ENCODE measurements at regions of chr19 and their contacts with region 1.

Region 1: GRCh38 chr19:53671663-53672062 is 39.9 kb downstream of the DPRX start:
- DNase-seq: no peak
- ATAC-seq: no peak
- H3K4me3 ChIP-seq: no peak overlapping the region
- H3K27ac ChIP-seq: no peak overlapping the region
- H3K4me1 ChIP-seq: no peaks in the 10 kb centered on the region
- H3K27me3 ChIP-seq: 0 out of 2 replicates have a peak, but pooled peaks cover under 1% of the 10 kb centered on the region
- CTCF ChIP-seq: no peak

Region 2: GRCh38 chr19:53431399-53432087 is 240.1 kb before region 1 on chr19 and contains the start of gene ZNF761:
- CTCF ChIA-PET with region 1: no interaction called
- POLR2A ChIA-PET with region 1: no interaction called
- in situ Hi-C with region 1: no loop called
- intact Hi-C with region 1: no loop called
- DNase-seq: peak; percentile 59
- ATAC-seq: peak; percentile 100
- H3K4me3 ChIP-seq: peak within 1 kb of the TSS; percentile 70 to 82
- H3K27ac ChIP-seq: peak within 1 kb of the TSS; percentile 94
- H3K4me1 ChIP-seq: no peaks in the 10 kb centered on the region
- H3K27me3 ChIP-seq: no peaks in the 10 kb centered on the region
- CTCF ChIP-seq: peak; percentile 17; the same call in 1 of the 2 replicates
- total RNA-seq, gene ZNF761: 21.8 TPM

Region 3: GRCh38 chr19:53642381-53643081 is 29.1 kb before region 1 on chr19:
- CTCF ChIA-PET with region 1: interaction called, 13 read pairs
- POLR2A ChIA-PET with region 1: no interaction called
- in situ Hi-C with region 1: no loop called
- intact Hi-C with region 1: no loop called
- DNase-seq: no peak
- ATAC-seq: no peak
- H3K4me3 ChIP-seq: no peak overlapping the region
- H3K27ac ChIP-seq: no peak overlapping the region
- H3K4me1 ChIP-seq: no peaks in the 10 kb centered on the region
- H3K27me3 ChIP-seq: no peaks in the 10 kb centered on the region
- CTCF ChIP-seq: no peak

Region 4: DNA sequence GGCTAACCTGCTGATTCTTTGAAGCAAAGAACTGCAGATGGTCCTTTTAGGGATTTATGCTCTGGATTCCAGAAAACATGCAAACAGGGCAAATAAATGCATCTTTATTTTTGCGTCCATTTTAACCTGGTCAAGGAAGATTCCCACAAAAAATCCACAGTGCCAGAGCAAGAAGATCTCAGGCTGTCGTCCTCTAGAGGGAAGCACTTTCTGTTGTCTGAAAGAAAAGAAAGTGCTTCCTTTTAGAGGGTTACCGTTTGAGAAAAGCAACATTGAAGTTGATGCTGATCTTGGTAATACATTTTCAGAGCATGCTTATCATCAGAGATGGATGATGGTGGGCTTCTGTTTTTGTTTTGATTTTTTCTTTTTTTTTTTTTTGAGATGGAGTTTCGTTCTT is 35.6 kb after region 1 on chr19:
- CTCF ChIA-PET with region 1: interaction called, 3 read pairs
- POLR2A ChIA-PET with region 1: interaction called, 11 read pairs
- in situ Hi-C with region 1: no loop called
- intact Hi-C with region 1: no loop called
- DNase-seq: no peak
- ATAC-seq: no peak
- H3K4me3 ChIP-seq: no peak overlapping the region
- H3K27ac ChIP-seq: no peak overlapping the region
- H3K4me1 ChIP-seq: no peaks in the 10 kb centered on the region
- H3K27me3 ChIP-seq: no peaks in the 10 kb centered on the region
- CTCF ChIP-seq: no peak

Region 5: GRCh38 chr19:53730390-53730789 is 58.7 kb after region 1 on chr19:
- CTCF ChIA-PET with region 1: no interaction called
- POLR2A ChIA-PET with region 1: interaction called, 12 read pairs
- in situ Hi-C with region 1: no loop called
- intact Hi-C with region 1: no loop called
- DNase-seq: no peak
- ATAC-seq: no peak
- H3K4me3 ChIP-seq: no peak overlapping the region
- H3K27ac ChIP-seq: no peak overlapping the region
- H3K4me1 ChIP-seq: no peaks in the 10 kb centered on the region
- H3K27me3 ChIP-seq: peaks cover 7% of the 10 kb centered on the region; the same call in 1 of the 2 replicates
- CTCF ChIP-seq: no peak